Heart left ventricle (tissue), 16 donors: ENCODE measurements at regions of chr1 and their contacts with region 1.

Region 1: DNA sequence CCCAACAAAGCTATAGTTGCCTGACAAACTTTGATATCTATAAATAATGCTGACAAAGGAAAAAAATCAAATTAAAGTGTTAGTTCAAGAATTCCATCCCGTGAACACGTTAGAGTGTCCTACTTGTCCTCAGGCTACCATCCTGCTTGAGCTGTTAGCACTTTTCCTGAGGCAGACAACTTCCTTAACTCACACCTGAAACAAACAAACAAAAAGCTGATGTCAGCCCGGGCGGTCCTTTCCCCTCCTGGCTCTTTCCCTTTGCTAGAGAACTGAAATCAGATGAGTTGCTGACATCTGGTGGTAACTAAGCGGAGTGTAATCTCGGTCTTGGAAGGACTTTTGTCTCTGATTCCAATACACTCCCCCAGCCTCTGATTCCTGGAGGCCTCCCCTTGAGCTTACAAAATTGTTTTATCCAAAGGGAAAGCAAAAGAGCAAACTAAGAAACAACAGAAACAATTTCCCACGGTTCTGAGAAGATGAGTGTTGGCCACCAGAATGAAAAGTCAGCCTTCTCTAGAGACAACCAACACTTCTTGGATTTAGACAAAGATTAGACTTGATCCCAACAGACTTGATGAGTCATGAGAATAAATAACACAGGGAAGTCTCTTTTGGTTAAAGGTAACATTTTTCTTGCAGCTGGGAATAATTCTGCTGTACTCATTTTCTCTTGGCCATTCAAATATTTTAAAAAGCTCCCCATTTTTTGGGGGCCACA is 135.4 kb downstream of the PROX1 start:
- DNase-seq: peak in 3 of 5 donors; percentile 22 to 51 (median 35)
- ATAC-seq: peak; percentile 64 to 89 (median 86)
- H3K4me3 ChIP-seq: no peak overlapping the region
- H3K27ac ChIP-seq: peak overlapping the region in 1 of 12 donors; percentile 31
- H3K4me1 ChIP-seq: peaks cover 0 to 7% (median 0%) of the 10 kb centered on the region in 12 donors
- H3K27me3 ChIP-seq: no peaks in the 10 kb centered on the region
- CTCF ChIP-seq: peak; percentile 36 to 71 (median 60)
- POLR2A ChIP-seq: no peak

Region 2: GRCh38 chr1:213122514-213122929 is 1000.7 kb before region 1 on chr1:
- intact Hi-C with region 1: loop called in 5 of 10 experiments (anchors 5 to 10 kb)
- DNase-seq: no peak
- ATAC-seq: no peak
- H3K4me3 ChIP-seq: no peak overlapping the region
- H3K27ac ChIP-seq: no peak overlapping the region
- H3K4me1 ChIP-seq: peaks cover 0 to 6% (median 0%) of the 10 kb centered on the region in 12 donors
- H3K27me3 ChIP-seq: no peaks in the 10 kb centered on the region
- CTCF ChIP-seq: peak; percentile 46 to 73 (median 65)
- POLR2A ChIP-seq: no peak

Region 3: GRCh38 chr1:213374369-213374768 is 748.9 kb before region 1 on chr1:
- intact Hi-C with region 1: loop called in 9 of 10 experiments (anchors 5 kb)
- DNase-seq: peak in 4 of 5 donors; percentile 28 to 55 (median 44)
- ATAC-seq: peak in 3 of 4 donors; percentile 58 to 72 (median 69)
- H3K4me3 ChIP-seq: no peak overlapping the region
- H3K27ac ChIP-seq: no peak overlapping the region
- H3K4me1 ChIP-seq: no peaks in the 10 kb centered on the region
- H3K27me3 ChIP-seq: no peaks in the 10 kb centered on the region
- CTCF ChIP-seq: peak; percentile 67 to 89 (median 82)
- POLR2A ChIP-seq: no peak

Region 4: GRCh38 chr1:213564215-213564659 is 559.0 kb before region 1 on chr1:
- intact Hi-C with region 1: loop called in 7 of 10 experiments (anchors 2 to 10 kb)
- DNase-seq: no peak
- ATAC-seq: peak in 1 of 4 donors; percentile 49
- H3K4me3 ChIP-seq: no peak overlapping the region
- H3K27ac ChIP-seq: no peak overlapping the region
- H3K4me1 ChIP-seq: no peaks in the 10 kb centered on the region
- H3K27me3 ChIP-seq: no peaks in the 10 kb centered on the region
- CTCF ChIP-seq: peak; percentile 13 to 50 (median 34)
- POLR2A ChIP-seq: no peak

Region 5: DNA sequence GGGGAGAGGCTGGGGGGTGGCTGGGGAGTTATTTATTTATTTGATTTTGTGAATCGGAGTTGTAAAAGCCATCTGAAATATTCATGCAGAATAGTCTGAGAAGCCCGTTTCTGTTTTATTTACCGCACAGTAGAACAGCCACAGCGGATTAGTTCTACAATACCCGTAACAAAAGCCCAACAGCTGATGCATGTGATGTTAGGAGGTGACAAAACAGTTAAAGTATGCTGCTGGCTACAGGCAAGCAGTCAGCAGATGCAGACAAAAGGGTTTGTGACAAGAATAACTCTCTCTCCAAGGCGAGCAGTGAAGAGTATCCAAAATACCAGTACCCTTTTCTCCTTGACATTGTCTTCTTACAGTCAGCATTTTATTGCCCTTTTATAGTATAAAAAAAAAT is 93.4 kb before region 1 on chr1:
- intact Hi-C with region 1: loop called in 1 of 10 experiments (anchors 10 kb)
- DNase-seq: peak in 2 of 5 donors; percentile 30 to 35
- ATAC-seq: peak; percentile 77 to 89 (median 85)
- H3K4me3 ChIP-seq: no peak overlapping the region
- H3K27ac ChIP-seq: peak overlapping the region; percentile 77 to 97 (median 92)
- H3K4me1 ChIP-seq: peaks cover 0 to 49% (median 7%) of the 10 kb centered on the region in 12 donors
- H3K27me3 ChIP-seq: no peaks in the 10 kb centered on the region
- CTCF ChIP-seq: no peak
- POLR2A ChIP-seq: no peak

Region 6: DNA sequence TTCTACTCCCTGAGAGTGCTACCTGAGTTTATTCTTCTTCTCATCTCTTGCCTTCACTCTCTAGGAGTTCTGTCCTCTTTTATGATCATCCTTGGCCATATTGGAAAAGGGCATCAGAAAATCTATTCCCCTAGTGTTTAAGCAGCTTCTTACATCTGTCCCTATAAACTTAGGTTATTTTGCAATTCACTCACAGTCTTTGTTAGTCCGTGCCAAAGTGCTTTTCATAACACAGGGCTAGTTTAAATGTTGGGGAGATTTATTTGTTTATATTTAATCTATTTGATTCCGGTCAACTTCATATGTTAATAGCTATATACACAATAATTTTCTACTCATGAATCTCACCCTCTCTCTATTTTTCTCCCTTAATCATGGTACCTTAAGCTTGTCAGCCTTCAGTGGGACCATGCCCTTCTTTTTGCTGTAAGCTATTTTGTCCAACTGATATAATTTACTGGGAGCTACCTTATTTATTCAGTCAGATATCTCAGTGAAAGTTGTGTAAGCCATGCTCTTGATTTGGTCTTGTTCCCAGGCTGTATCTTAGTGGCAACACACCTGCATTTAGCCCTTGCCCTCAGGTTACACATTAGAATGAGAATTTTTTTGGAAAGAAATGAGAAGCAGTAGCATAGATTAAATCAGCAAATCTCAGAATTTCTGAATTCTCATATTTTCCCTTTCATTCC is 51.4 kb after region 1 on chr1:
- intact Hi-C with region 1: no loop called
- DNase-seq: no peak
- ATAC-seq: no peak
- H3K4me3 ChIP-seq: no peak overlapping the region
- H3K27ac ChIP-seq: no peak overlapping the region
- H3K4me1 ChIP-seq: no peaks in the 10 kb centered on the region
- H3K27me3 ChIP-seq: peaks cover 0 to 18% (median 0%) of the 10 kb centered on the region in 9 donors
- CTCF ChIP-seq: no peak
- POLR2A ChIP-seq: no peak